Dorsolateral prefrontal cortex (tissue), 120 donors: ENCODE measurements at regions of chr16 and their contacts with region 1.

Region 1: DNA sequence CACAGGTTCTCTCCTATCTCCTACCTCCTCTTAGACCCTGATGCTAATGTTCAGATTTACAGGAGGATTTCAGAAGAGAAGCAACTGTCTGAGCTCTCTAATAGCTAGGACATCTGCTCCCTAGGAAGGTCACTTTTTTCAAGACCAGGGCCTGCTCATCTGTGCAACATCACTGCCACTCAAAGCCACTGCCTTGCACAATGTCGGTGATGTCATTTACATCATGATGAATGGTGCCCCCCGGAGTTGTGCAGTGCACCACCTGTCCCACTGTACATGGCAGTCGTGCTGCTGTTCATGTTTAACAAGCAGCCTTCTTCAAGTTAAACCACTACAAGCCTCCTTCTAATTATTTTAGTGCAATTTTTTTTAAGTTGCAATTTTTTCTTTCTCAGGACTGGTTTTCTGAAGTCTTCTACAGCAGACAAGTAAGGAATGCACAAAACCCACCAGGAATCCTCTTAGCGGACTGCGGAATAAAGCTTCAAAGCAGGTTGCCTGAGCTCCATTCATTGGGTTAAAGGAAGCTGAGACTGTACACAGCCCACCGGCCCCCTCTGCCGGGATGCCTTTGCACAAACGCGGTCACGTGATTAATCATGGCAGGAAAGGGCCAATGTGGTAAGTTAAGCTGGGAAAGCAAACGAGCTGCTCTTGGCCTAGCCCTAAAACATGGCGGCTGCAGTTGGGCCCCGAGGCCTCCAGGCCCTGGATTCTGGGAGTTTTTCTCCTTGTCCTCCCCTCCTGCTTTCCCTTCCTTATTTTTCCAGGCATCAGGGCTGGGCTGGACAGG is 74.1 kb downstream of the MYH11 start:
- DNase-seq: no peak
- H3K4me3 ChIP-seq: no peak overlapping the region
- H3K27ac ChIP-seq: no peak overlapping the region
- H3K27me3 ChIP-seq: peaks cover 0 to 12% (median 0%) of the 10 kb centered on the region in 45 donors
- CTCF ChIP-seq: no peak

Region 2: GRCh38 chr16:15672514-15673167 is 110.1 kb before region 1 on chr16:
- intact Hi-C with region 1: no loop called
- DNase-seq: peak; percentile 7 to 91 (median 78)
- H3K4me3 ChIP-seq: peak overlapping the region in 54 of 59 donors; percentile 4 to 55 (median 28)
- H3K27ac ChIP-seq: peak overlapping the region; percentile 81 to 100 (median 98)
- H3K27me3 ChIP-seq: no peaks in the 10 kb centered on the region
- CTCF ChIP-seq: peak in 8 of 56 donors; percentile 7 to 32 (median 12)

Region 3: DNA sequence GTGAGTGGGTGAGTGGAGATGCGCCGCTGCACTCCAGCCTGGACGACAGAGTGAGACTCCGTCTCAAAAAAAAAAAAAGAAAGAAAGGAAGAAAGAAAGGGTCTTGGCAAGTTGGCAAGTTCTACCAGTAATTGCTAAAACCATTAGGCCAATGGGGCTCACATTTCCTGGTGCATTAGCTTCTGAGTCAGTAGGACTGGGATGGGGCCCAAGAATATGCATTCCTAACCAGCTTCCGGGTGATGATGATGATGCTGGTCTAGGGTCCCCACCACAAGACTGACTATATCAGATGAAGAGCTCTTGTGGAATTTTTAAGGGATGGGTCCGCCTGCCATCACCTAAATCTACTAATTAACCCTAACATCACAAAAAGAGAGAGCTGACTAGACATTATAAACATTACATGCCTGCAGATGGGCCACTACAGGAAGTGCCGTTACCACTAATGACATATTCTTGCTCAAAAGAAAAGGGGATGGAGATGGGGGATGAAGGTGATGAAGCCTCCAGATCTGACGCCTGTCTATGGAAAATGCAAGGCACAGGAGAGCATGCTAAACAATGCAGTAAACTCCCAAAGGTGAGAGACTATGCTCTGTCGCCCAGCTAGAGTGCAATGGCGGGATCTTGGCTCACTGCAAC is 61.0 kb after region 1 on chr16:
- intact Hi-C with region 1: loop called in 1 of 2 experiments (anchors 10 kb)
- DNase-seq: no peak
- H3K4me3 ChIP-seq: no peak overlapping the region
- H3K27ac ChIP-seq: no peak overlapping the region
- H3K27me3 ChIP-seq: peaks cover 0 to 6% (median 0%) of the 10 kb centered on the region in 45 donors
- CTCF ChIP-seq: no peak